ENCODE measurements at regions of chr14 and their contacts with region 1.

Region 1: GRCh38 chr14:94136575-94137331 is 7.3 kb upstream of the IFI27L2 start:
- DNase-seq: peak; percentile 89
- H3K4me3 ChIP-seq: no peak overlapping the region
- H3K27ac ChIP-seq: no peak overlapping the region
- H3K4me1 ChIP-seq: no peaks in the 10 kb centered on the region
- H3K27me3 ChIP-seq: no peaks in the 10 kb centered on the region
- CTCF ChIP-seq: peak; percentile 96

Region 2: DNA sequence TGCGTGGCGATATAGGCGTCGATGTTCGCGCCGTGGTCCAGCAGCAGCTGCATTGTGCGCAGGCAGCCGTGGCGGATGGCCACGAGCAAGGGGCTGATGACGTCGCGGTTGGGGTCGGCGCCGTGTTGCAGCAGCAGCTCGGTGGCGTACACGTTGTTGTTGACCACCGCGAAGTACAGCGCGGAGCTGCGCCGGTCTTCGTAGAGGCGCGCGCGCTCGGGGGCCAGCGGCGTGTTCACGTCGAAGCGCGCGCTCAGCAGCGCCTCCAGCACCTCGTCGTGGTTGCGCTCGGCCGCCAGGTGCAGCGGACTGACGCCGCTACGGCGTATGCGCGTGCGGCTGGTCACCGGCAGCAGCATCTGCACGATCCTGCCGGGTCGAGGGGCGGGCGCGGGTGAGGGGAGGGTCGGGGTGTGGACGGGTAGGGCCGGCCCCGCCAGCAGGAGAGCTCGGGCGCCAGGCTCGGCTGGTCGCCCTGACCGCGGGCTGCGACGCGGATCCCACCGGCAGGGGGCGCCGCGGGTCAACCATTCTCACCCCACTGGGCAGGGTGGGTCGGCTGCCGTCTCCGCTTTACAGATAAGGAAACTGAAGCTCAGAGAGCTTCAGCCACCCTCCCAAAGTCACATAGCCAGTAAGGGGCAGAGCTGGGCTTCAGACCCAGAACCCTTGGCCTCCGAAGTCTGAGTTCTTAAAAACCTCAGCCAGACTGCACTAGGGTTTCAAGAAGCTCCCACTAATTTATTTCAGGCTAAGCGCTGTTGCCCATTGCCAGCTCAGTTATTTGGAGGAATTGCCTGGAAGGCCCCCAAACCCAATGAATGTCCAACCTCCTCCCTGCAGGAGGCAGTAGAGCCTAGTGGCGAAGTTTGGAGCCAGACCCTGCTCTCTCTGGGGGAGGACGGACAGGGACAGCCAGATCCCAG is 197.2 kb before region 1 on chr14:
- CTCF ChIA-PET with region 1: interaction called, 8 read pairs
- POLR2A ChIA-PET with region 1: no interaction called
- intact Hi-C with region 1: loop called (anchors 5 kb)
- DNase-seq: peak; percentile 70
- H3K4me3 ChIP-seq: peak overlapping the region; percentile 24
- H3K27ac ChIP-seq: no peak overlapping the region
- H3K4me1 ChIP-seq: peaks cover 6% of the 10 kb centered on the region
- H3K27me3 ChIP-seq: no peaks in the 10 kb centered on the region
- CTCF ChIP-seq: peak; percentile 67

Region 3: GRCh38 chr14:94036313-94037050 is 100.3 kb before region 1 on chr14:
- CTCF ChIA-PET with region 1: interaction called, 26 read pairs
- POLR2A ChIA-PET with region 1: no interaction called
- intact Hi-C with region 1: loop called (anchors 1 kb)
- DNase-seq: peak; percentile 68
- H3K4me3 ChIP-seq: no peak overlapping the region
- H3K27ac ChIP-seq: no peak overlapping the region
- H3K4me1 ChIP-seq: no peaks in the 10 kb centered on the region
- H3K27me3 ChIP-seq: no peaks in the 10 kb centered on the region
- CTCF ChIP-seq: peak; percentile 83

Region 4: GRCh38 chr14:94175011-94175745 is 38.4 kb after region 1 on chr14:
- CTCF ChIA-PET with region 1: interaction called, 10 read pairs
- POLR2A ChIA-PET with region 1: no interaction called
- intact Hi-C with region 1: loop called (anchors 5 kb)
- DNase-seq: no peak
- H3K4me3 ChIP-seq: peak overlapping the region; percentile 53
- H3K27ac ChIP-seq: no peak overlapping the region
- H3K4me1 ChIP-seq: peaks cover 5% of the 10 kb centered on the region
- H3K27me3 ChIP-seq: peaks cover 60% of the 10 kb centered on the region
- CTCF ChIP-seq: no peak

Region 5: DNA sequence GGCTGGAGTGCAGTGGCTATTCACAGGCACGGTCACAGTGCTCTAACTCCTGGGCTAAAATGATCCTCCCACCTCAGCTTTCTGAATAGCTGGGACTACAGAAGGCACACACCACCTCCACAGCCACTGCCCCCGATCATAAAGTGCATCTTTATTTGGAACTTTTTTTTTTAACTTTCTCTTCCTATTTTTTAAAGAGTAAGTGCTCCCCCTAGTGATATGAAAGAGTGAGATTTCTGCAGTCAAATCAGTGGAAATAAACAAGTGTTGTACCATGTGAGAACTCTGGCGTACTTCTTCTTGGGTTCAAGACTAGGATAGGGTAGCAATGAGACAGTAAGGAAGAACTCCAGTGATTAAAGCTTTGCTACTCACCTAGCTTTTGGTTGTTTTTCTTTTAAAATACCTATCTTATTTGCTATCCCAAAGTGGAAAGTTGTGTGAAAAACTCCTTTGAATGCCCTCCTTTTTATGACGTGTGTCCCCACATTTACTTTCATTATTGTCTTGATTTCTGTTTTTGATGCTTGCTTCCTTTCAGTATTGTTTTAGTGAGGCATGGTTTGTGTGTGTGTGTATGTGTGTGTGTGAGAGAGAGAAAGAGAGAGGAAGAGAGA is 44.0 kb after region 1 on chr14:
- CTCF ChIA-PET with region 1: interaction called, 10 read pairs
- POLR2A ChIA-PET with region 1: no interaction called
- intact Hi-C with region 1: loop called (anchors 5 kb)
- DNase-seq: peak; percentile 67
- H3K4me3 ChIP-seq: no peak overlapping the region
- H3K27ac ChIP-seq: no peak overlapping the region
- H3K4me1 ChIP-seq: no peaks in the 10 kb centered on the region
- H3K27me3 ChIP-seq: peaks cover 32% of the 10 kb centered on the region
- CTCF ChIP-seq: peak; percentile 74

Region 6: DNA sequence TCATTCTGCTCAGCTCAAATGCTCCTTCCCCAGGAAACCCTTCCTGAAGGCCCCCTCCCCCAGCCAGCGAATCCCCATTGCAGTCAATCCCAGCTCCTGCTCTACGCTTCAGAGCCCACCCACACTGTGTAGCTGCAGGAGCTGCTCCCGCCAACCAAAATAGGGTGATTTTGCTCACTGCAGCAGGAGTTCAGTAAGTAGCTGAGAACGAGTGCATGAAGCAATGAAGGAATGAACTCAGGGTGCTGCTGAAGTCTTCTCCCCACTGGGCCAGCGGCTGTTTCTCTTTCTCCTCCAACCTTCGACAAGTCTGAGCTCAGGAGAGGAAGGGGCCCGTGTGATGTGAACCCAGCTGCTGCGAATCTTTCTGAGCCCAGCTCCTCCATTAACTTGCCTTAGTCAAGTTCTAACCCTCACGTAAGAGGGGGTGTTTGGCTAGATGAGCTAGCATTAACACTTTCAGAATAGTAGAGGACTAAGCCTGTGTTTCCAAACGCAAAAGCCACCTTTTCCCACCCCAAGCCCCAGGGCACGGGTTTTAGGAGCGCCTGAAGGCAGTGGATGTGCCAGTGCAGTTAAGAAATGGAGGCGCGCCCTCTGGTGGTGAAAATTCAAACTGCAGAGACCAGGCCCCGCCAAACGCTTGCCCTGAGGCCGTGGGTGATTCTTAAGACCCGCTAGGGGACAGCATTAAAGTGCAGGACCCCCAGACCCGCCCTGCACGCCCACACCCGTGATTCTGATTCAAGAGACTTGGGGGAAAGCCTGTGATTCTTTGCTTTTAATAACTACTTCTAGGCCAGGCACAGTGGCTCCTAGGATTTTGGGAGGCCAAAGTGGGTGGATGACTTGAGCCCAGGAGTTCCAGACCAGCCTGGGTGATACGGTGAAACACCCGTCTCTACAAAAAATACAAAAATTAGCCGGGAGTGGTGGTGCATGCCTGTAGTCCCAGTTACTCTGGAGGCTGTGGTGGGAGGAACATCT is 412.5 kb after region 1 on chr14:
- CTCF ChIA-PET with region 1: no interaction called
- POLR2A ChIA-PET with region 1: no interaction called
- intact Hi-C with region 1: loop called (anchors 5 kb)
- DNase-seq: peak; percentile 72
- H3K4me3 ChIP-seq: no peak overlapping the region
- H3K27ac ChIP-seq: no peak overlapping the region
- H3K4me1 ChIP-seq: no peaks in the 10 kb centered on the region
- H3K27me3 ChIP-seq: peaks cover 5% of the 10 kb centered on the region
- CTCF ChIP-seq: peak; percentile 92